Naive thymus-derived CD4-positive, alpha-beta T cell (primary cell): ENCODE measurements at regions of chr7 and their contacts with region 1.

Region 1: GRCh38 chr7:100604028-100604975 is 2.1 kb downstream of the PCOLCE start:
- DNase-seq: peak in 8 of 9 donors; percentile 47 to 81 (median 59)
- ATAC-seq: peak; percentile 81
- H3K4me3 ChIP-seq: peak overlapping the region; percentile 70
- H3K4me3 Mint-ChIP-seq: peak overlapping the region; percentile 79 to 94 (median 87)
- H3K27ac ChIP-seq: peak overlapping the region; percentile 67
- H3K27ac Mint-ChIP-seq: peak overlapping the region; percentile 21 to 92 (median 84)
- H3K4me1 ChIP-seq: peaks cover 6 to 10% of the 10 kb centered on the region in 2 donors
- H3K4me1 Mint-ChIP-seq: peaks cover 7 to 35% (median 16%) of the 10 kb centered on the region in 7 donors
- H3K27me3 ChIP-seq: no peaks in the 10 kb centered on the region
- H3K27me3 Mint-ChIP-seq: peaks cover 0 to 15% (median 0%) of the 10 kb centered on the region in 5 donors

Region 2: DNA sequence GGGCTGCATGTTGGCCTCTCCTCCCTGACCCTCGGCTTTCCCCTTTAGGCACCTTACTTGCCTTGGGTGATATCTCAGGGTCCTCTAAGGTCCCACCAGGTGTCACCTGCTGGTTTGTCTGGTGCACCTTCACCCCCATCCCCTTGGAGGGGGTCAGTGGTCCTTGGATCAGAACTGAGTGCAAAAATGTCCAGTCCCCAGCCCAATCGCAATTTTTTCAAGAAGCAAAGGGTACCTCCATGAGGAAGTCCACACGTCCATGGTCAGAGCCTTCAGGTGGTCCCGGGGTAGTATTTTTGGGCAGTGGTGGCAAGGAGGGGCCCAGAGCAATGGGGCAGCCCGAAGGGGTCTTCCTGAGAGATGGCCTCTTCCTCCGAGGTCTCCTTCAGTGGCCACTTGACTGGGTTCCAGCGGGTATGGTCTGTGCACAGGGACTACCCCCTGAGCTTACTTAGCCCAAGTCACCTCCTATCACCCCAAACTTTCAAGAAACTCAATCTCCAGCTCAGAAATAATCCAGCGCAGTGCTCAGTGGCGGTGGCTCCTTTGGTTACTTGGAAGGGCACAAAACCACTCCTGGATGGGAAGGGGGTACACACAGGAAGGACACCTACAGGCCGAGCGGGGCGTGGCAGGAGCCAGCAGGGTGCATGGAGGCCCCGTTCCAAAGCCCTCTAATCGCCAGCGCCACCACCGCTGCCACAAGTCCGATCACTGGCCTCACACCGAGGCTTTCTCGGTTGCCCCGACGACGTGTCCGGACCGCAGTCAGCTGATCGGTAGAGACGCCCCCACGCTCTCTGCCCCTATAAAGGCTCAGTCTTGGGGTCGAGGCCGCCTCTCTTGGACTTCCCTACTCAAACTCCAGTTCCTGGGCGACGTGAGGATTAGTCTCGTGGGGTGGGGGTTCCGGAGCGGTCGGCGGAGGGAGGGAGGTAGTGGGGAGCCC is 35.1 kb before region 1 on chr7:
- CTCF ChIA-PET with region 1: interaction called, 6 read pairs
- POLR2A ChIA-PET with region 1: interaction called, 4 read pairs
- intact Hi-C with region 1: loop called in 1 of 2 experiments (anchors 1 kb)
- DNase-seq: peak in 5 of 9 donors; percentile 31 to 47 (median 38)
- ATAC-seq: peak; percentile 45
- H3K4me3 ChIP-seq: peak overlapping the region; percentile 51
- H3K4me3 Mint-ChIP-seq: peak overlapping the region; percentile 3 to 78 (median 70)
- H3K27ac ChIP-seq: peak overlapping the region; percentile 59
- H3K27ac Mint-ChIP-seq: peak overlapping the region; percentile 62 to 92 (median 83)
- H3K4me1 ChIP-seq: peaks cover 25 to 32% of the 10 kb centered on the region in 2 donors
- H3K4me1 Mint-ChIP-seq: peaks cover 12 to 49% (median 30%) of the 10 kb centered on the region in 7 donors
- H3K27me3 ChIP-seq: no peaks in the 10 kb centered on the region
- H3K27me3 Mint-ChIP-seq: peaks cover 0 to 4% (median 0%) of the 10 kb centered on the region in 5 donors

Region 3: GRCh38 chr7:100626530-100627237 is 22.4 kb after region 1 on chr7:
- CTCF ChIA-PET with region 1: interaction called, 3 read pairs
- POLR2A ChIA-PET with region 1: interaction called, 4 read pairs
- intact Hi-C with region 1: loop called (anchors 1 to 2 kb)
- DNase-seq: peak; percentile 56 to 88 (median 81)
- ATAC-seq: peak; percentile 99
- H3K4me3 ChIP-seq: peak overlapping the region; percentile 58
- H3K4me3 Mint-ChIP-seq: peak overlapping the region; percentile 60 to 87 (median 76)
- H3K27ac ChIP-seq: peak overlapping the region; percentile 84
- H3K27ac Mint-ChIP-seq: peak overlapping the region; percentile 49 to 88 (median 75)
- H3K4me1 ChIP-seq: peaks cover 14 to 18% of the 10 kb centered on the region in 2 donors
- H3K4me1 Mint-ChIP-seq: peaks cover 26 to 58% (median 43%) of the 10 kb centered on the region in 7 donors
- H3K27me3 ChIP-seq: peaks cover 0 to 4% of the 10 kb centered on the region in 2 donors
- H3K27me3 Mint-ChIP-seq: no peaks in the 10 kb centered on the region

Region 4: GRCh38 chr7:100632951-100633717 is 28.8 kb after region 1 on chr7:
- CTCF ChIA-PET with region 1: no interaction called
- POLR2A ChIA-PET with region 1: no interaction called
- intact Hi-C with region 1: loop called in 1 of 2 experiments (anchors 1 kb)
- DNase-seq: peak in 8 of 9 donors; percentile 39 to 72 (median 45)
- ATAC-seq: peak; percentile 79
- H3K4me3 ChIP-seq: peak overlapping the region; percentile 68
- H3K4me3 Mint-ChIP-seq: peak overlapping the region; percentile 79 to 89 (median 84)
- H3K27ac ChIP-seq: peak overlapping the region; percentile 56
- H3K27ac Mint-ChIP-seq: peak overlapping the region in 7 of 9 donors; percentile 40 to 92 (median 63)
- H3K4me1 ChIP-seq: no peaks in the 10 kb centered on the region
- H3K4me1 Mint-ChIP-seq: peaks cover 10 to 42% (median 25%) of the 10 kb centered on the region in 7 donors
- H3K27me3 ChIP-seq: no peaks in the 10 kb centered on the region
- H3K27me3 Mint-ChIP-seq: peaks cover 0 to 4% (median 0%) of the 10 kb centered on the region in 5 donors

Region 5: DNA sequence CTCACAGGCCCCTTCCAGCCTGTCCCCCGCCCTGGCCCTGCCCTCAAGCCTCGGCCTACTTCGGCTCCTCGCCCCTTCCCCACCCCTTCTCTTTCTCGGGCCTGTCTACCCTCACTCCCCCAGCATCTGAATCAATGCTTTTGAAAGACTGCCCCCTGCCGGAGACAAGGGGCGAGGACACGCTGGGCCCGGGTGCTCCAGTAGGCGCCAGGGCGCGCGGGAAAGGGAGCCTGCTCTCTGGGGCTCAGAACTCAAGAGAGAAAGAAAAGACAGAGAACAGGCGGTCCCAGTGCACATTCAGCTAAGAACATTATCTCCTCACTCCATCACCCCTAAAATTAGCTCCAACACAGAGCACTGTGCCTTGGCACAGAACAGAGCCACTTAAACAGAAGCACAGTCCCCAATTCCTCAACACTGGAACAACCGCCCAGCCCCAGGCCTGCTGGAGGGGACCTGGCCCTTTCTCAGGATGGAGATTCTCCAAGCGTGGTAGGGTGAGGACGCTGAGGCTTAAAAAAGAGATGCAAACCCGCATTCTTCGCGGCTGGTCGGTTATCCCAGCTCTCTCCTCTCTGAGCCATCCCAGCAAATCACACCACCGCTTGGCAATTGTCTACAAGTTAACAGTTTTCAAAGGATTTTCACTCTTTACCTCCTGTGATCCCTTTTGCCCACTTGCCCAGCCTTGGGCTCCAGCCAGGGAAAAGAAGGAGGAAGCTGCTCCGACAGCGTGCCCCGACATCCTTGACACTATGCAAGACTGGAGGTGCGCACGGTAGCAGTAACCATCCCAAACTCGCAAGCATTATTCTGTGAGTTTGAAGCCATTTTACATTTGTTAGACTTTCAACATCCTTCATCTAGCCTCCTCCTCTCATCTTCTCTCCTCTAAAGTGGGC is 87.6 kb after region 1 on chr7:
- CTCF ChIA-PET with region 1: interaction called, 5 read pairs
- POLR2A ChIA-PET with region 1: interaction called, 4 read pairs
- intact Hi-C with region 1: loop called (anchors 1 kb)
- DNase-seq: peak; percentile 64 to 85 (median 78)
- ATAC-seq: peak; percentile 79
- H3K4me3 ChIP-seq: peak overlapping the region; percentile 67
- H3K4me3 Mint-ChIP-seq: peak overlapping the region; percentile 92 to 100 (median 94)
- H3K27ac ChIP-seq: peak overlapping the region; percentile 73
- H3K27ac Mint-ChIP-seq: peak overlapping the region; percentile 62 to 96 (median 95)
- H3K4me1 ChIP-seq: peaks cover 23 to 27% of the 10 kb centered on the region in 2 donors
- H3K4me1 Mint-ChIP-seq: peaks cover 29 to 54% (median 41%) of the 10 kb centered on the region in 7 donors
- H3K27me3 ChIP-seq: no peaks in the 10 kb centered on the region
- H3K27me3 Mint-ChIP-seq: peaks cover 0 to 16% (median 0%) of the 10 kb centered on the region in 5 donors

Region 6: GRCh38 chr7:100726996-100727761 is 122.9 kb after region 1 on chr7:
- CTCF ChIA-PET with region 1: no interaction called
- POLR2A ChIA-PET with region 1: no interaction called
- intact Hi-C with region 1: loop called in 1 of 2 experiments (anchors 1 kb)
- DNase-seq: no peak
- ATAC-seq: no peak
- H3K4me3 ChIP-seq: no peak overlapping the region
- H3K4me3 Mint-ChIP-seq: no peak overlapping the region
- H3K27ac ChIP-seq: no peak overlapping the region
- H3K27ac Mint-ChIP-seq: peak overlapping the region in 1 of 9 donors; percentile 22
- H3K4me1 ChIP-seq: no peaks in the 10 kb centered on the region
- H3K4me1 Mint-ChIP-seq: peaks cover 0 to 5% (median 0%) of the 10 kb centered on the region in 7 donors
- H3K27me3 ChIP-seq: peaks cover 0 to 4% of the 10 kb centered on the region in 2 donors
- H3K27me3 Mint-ChIP-seq: peaks cover 16 to 31% (median 21%) of the 10 kb centered on the region in 5 donors

Region 7: DNA sequence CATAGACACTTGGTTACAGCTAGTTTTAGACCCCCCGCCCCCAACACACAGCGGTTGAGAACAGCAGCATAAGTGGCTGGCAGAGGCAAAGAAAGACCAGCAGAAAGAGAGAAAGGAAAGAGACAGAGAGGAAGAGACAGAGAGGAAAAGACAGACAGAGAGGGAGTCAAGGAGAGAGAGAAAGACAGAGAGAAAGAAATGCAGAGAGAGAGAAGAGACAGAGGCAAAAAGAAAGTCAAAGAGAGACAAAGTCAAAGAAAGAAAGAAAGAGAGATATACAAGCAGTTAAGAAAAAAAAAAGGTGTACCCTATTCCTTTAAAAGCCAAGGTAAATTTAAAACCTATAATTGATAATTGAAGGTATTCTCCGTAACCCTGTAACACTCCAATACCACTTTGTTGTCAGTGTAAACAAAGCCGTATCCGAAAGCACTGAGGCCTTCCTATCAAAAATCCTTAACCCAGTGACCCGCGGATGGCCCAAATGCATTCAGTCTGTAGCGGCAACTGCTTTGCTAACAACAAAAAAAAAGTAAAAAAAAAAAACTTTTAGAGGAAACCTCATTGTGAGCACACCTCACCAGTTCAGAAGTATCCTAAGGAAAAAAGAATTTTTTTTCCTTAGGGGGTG is 236.3 kb after region 1 on chr7:
- CTCF ChIA-PET with region 1: no interaction called
- POLR2A ChIA-PET with region 1: no interaction called
- intact Hi-C with region 1: no loop called
- DNase-seq: no peak
- ATAC-seq: no peak
- H3K4me3 ChIP-seq: no peak overlapping the region
- H3K4me3 Mint-ChIP-seq: no peak overlapping the region
- H3K27ac ChIP-seq: no peak overlapping the region
- H3K27ac Mint-ChIP-seq: no peak overlapping the region
- H3K4me1 ChIP-seq: no peaks in the 10 kb centered on the region
- H3K4me1 Mint-ChIP-seq: peaks cover 4 to 17% (median 15%) of the 10 kb centered on the region in 7 donors
- H3K27me3 ChIP-seq: no peaks in the 10 kb centered on the region
- H3K27me3 Mint-ChIP-seq: no peaks in the 10 kb centered on the region